BJ (cell line): ENCODE measurements at regions of chr19 and their contacts with region 1.

Region 1: GRCh38 chr19:10551698-10552301 is 8.1 kb downstream of the ATG4D start:
- DNase-seq: no peak
- H3K4me3 ChIP-seq: no peak overlapping the region
- H3K27me3 ChIP-seq: no peaks in the 10 kb centered on the region
- CTCF ChIP-seq: 0 out of 2 replicates have a peak, but pooled peaks have one; percentile 26

Region 2: GRCh38 chr19:10120538-10121189 is 431.1 kb before region 1 on chr19:
- CTCF ChIA-PET with region 1: no interaction called
- POLR2A ChIA-PET with region 1: no interaction called
- DNase-seq: peak; percentile 68
- H3K4me3 ChIP-seq: no peak overlapping the region; the same call in 1 of the 2 replicates
- H3K27me3 ChIP-seq: no peaks in the 10 kb centered on the region
- CTCF ChIP-seq: no peak

Region 3: DNA sequence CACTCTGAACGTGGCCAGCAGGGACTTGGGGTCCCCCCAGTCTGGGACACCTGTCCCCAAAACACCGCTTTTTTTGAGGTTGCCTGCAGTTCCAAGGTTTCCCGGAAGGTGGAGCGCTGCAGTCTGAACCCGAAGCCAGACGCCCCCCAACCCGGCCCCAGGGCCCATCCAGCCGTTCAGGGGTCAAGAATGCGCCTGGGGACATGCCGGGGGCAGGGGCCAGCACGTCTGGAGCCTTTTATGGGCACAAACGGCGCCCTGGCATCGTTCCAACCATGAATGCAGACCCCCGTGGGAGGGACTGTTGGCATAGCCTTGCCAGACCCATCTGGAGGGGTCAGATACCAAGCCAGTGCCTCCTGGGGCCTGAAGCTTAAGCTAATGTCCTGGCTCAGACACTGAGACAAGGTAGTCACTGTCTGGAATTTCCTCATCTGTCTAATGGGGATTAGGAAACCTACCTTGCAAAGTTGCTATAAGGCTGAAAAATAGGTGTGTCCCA is 41.4 kb before region 1 on chr19:
- CTCF ChIA-PET with region 1: interaction called, 10 read pairs
- POLR2A ChIA-PET with region 1: no interaction called
- DNase-seq: no peak
- H3K4me3 ChIP-seq: no peak overlapping the region
- H3K27me3 ChIP-seq: peaks cover 15% of the 10 kb centered on the region
- CTCF ChIP-seq: peak; percentile 81

Region 4: DNA sequence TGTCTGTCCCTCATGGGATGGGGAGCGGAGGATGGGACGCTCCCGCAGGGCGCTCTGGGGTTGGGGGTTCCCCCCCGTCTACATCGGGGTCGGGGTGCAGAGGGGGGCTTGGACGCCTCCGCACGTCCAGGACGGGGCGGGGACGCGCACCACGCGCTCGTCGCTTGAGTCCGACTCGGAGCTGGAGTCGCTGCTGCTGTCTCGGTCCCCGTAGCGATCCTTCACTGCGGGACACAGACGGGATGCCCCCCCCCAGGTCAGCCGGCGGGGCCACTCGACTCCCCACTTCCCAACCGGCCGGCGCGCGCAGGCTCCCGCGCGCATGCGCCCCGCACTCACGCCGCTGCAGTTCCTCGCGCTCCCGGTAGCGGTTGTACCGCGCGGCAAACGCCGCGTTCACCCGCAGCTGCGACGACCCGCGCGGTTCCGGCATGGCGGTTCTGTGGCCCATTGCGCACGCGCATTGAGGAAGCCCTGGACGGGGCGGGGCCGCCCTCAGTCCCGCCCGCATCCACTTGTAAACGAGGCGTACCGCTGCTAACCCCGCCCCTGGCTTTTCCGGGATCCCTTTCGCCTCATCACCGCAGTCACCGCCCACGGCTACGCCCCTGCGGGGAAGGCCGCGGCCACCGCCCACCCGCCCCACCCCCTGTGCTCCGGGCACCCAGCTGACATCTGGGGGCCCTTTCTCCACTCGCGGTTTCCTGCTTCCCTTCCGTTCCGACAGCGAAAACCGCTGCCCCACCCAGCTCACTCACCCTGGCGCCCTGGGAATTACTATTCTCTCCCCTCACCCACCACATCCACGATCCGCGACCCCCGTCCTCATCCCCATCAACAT is 14.0 kb after region 1 on chr19 and contains the start of gene KRI1:
- CTCF ChIA-PET with region 1: interaction called, 4 read pairs
- POLR2A ChIA-PET with region 1: interaction called, 13 read pairs
- DNase-seq: peak; percentile 84
- H3K4me3 ChIP-seq: peak within 1 kb of the TSS; percentile 99
- H3K27me3 ChIP-seq: no peaks in the 10 kb centered on the region
- CTCF ChIP-seq: peak; percentile 27
- polyA plus RNA-seq, gene KRI1: 8.4 and 10.0 TPM in 2 replicates